Upper lobe of right lung (tissue), 1 donor: ENCODE measurements at regions of chr11 and their contacts with region 1.

Region 1: GRCh38 chr11:75802913-75803820 is 11.8 kb upstream of the UVRAG start:
- DNase-seq: no peak
- ATAC-seq: peak; percentile 95
- H3K4me3 ChIP-seq: no peak overlapping the region
- H3K27ac ChIP-seq: no peak overlapping the region
- H3K4me1 ChIP-seq: no peaks in the 10 kb centered on the region
- H3K27me3 ChIP-seq: no peaks in the 10 kb centered on the region
- CTCF ChIP-seq: peak; percentile 92

Region 2: GRCh38 chr11:75867775-75868374 is 64.7 kb after region 1 on chr11:
- intact Hi-C with region 1: loop called (anchors 5 kb)
- DNase-seq: no peak
- ATAC-seq: peak; percentile 83
- H3K4me3 ChIP-seq: no peak overlapping the region
- H3K27ac ChIP-seq: no peak overlapping the region
- H3K4me1 ChIP-seq: peaks cover 6% of the 10 kb centered on the region
- H3K27me3 ChIP-seq: no peaks in the 10 kb centered on the region
- CTCF ChIP-seq: peak; percentile 81